Activated CD4-positive, alpha-beta memory T cell treated with anti-CD3 and anti-CD28 coated beads for 36 hours (primary cell): ENCODE measurements at regions of chr7 and their contacts with region 1.

Region 1: DNA sequence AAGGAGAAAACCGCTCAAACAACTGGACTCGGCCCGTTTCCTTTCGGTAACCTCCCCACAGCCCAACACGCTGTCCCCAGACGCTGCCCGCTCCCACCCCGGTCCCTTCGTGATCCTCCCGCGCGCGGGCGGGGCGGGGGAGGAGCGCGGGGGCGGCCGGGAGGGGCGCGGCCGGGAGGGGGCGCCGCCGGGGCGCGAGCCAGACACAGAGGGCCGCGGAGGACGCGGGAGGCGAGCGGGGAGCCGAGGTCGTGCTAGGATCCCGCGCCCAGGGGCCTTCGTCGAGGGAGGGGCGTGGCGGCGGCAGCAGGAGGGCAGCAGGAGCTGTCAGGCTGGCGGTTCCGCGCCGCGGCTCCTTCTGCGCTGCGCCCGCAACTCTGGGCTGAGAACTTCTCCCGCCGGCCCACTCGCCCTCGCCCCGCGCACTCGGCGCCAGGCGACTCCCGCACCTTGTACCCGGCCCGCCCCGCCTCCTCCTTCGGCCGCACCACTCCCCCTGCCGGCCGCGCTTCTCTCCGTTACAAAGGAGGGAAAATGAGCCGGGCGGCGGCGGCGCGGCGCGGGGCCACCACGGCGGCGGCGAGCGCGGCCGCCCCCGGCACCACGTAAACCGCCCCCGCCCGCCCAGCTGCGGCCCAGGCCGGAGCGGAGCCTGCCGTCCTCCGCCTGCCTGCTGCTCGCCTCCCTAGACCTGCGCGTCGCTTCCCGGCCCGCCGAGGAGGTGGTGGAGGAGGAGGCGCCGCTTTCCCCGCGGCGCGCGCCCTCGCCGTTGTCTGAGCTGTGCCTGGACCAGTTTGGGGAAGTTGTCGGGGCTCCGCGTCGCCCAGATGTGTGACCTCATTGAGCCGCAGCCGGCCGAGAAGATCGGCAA is at the start of gene CDK14:
- DNase-seq: peak; percentile 60
- H3K4me3 Mint-ChIP-seq: peak within 1 kb of the TSS; percentile 70
- H3K27ac Mint-ChIP-seq: no peak within 1 kb of the TSS
- H3K4me1 Mint-ChIP-seq: peaks cover 15% of the 10 kb centered on the region
- H3K27me3 Mint-ChIP-seq: peaks cover 46% of the 10 kb centered on the region
- total RNA-seq, gene CDK14: not detected

Region 2: GRCh38 chr7:90483251-90483650 is 112.8 kb before region 1 on chr7:
- CTCF ChIA-PET with region 1: no interaction called
- POLR2A ChIA-PET with region 1: no interaction called
- intact Hi-C with region 1: no loop called
- DNase-seq: no peak
- H3K4me3 Mint-ChIP-seq: no peak overlapping the region
- H3K27ac Mint-ChIP-seq: no peak overlapping the region
- H3K4me1 Mint-ChIP-seq: no peaks in the 10 kb centered on the region
- H3K27me3 Mint-ChIP-seq: peaks cover 8% of the 10 kb centered on the region

Region 3: DNA sequence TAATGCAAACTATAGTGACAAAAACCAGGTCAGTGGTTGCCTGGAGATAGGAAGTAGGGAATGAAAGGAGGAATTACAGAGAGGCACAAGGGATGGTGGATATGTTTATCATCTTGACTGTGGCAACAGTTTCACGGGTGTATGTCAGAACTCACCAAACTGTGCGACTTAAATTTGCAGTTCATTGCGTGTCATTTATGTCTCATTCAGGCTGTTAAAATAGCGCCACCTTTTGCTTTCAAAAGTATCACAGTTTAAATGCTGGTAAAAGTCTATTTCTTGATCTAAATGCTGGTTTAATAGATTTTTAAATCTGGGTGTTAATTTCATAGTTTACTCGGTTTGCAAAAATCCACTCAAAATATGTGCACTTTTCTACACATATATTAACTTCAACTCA is 75.6 kb before region 1 on chr7:
- CTCF ChIA-PET with region 1: no interaction called
- POLR2A ChIA-PET with region 1: no interaction called
- intact Hi-C with region 1: no loop called
- DNase-seq: no peak
- H3K4me3 Mint-ChIP-seq: no peak overlapping the region
- H3K27ac Mint-ChIP-seq: no peak overlapping the region
- H3K4me1 Mint-ChIP-seq: no peaks in the 10 kb centered on the region
- H3K27me3 Mint-ChIP-seq: no peaks in the 10 kb centered on the region

Region 4: DNA sequence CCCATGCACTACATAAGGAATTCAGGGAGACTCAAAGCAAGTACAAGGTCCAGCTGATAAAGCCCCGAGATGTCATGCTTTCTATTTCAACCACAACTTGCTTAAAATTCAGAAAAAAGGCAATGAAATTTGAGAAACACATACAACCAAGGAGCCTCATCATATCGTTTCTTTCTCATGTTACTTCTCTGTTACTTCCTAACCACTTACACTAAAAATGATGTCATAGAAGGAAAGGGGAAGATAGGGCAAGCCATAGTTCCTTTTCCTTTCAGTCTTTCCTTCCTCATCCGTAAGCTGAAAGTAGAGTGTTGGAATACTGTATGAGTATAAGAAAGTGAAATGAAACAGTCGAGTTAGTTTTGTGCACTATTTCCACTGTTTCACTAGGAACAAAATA is 27.8 kb before region 1 on chr7:
- CTCF ChIA-PET with region 1: no interaction called
- POLR2A ChIA-PET with region 1: no interaction called
- intact Hi-C with region 1: no loop called
- DNase-seq: no peak
- H3K4me3 Mint-ChIP-seq: no peak overlapping the region
- H3K27ac Mint-ChIP-seq: no peak overlapping the region
- H3K4me1 Mint-ChIP-seq: no peaks in the 10 kb centered on the region
- H3K27me3 Mint-ChIP-seq: peaks cover 3% of the 10 kb centered on the region

Region 5: GRCh38 chr7:90613088-90613498 is 17.1 kb after region 1 on chr7:
- CTCF ChIA-PET with region 1: interaction called, 3 read pairs
- POLR2A ChIA-PET with region 1: no interaction called
- intact Hi-C with region 1: loop called (anchors 1 kb)
- DNase-seq: peak; percentile 27
- H3K4me3 Mint-ChIP-seq: no peak overlapping the region
- H3K27ac Mint-ChIP-seq: no peak overlapping the region
- H3K4me1 Mint-ChIP-seq: peaks cover 8% of the 10 kb centered on the region
- H3K27me3 Mint-ChIP-seq: peaks cover 7% of the 10 kb centered on the region